ENCODE measurements at regions of chr12 and their contacts with region 1.

Region 1: DNA sequence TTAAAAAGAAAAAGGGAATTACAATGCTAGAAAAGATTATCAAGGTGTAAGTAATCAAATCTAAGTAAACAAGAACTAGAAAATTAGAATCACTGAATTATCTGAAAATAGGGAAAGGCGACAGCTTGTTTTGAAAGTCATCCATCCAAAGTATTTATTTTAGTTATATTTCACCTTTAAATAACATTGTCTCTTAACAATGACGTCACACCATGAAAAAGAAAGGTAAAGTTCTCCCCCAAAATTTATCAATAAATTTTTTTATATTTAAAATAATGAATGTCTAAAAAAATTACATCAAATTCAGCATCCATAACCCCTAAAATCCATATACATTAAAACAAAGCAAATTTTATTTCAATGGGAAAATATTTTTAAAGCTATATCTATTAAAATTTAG is 223.2 kb downstream of the RERGL start:
- DNase-seq: no peak
- H3K4me3 ChIP-seq: no peak overlapping the region
- H3K27ac ChIP-seq: no peak overlapping the region
- H3K4me1 ChIP-seq: no peaks in the 10 kb centered on the region
- H3K27me3 ChIP-seq: no peaks in the 10 kb centered on the region
- CTCF ChIP-seq: no peak
- EP300 ChIP-seq: no peak
- POLR2A ChIP-seq: no peak

Region 2: GRCh38 chr12:17148706-17149105 is 718.1 kb before region 1 on chr12:
- in situ Hi-C with region 1: no loop called
- intact Hi-C with region 1: no loop called
- DNase-seq: no peak
- H3K4me3 ChIP-seq: no peak overlapping the region
- H3K27ac ChIP-seq: no peak overlapping the region
- H3K4me1 ChIP-seq: no peaks in the 10 kb centered on the region
- H3K27me3 ChIP-seq: no peaks in the 10 kb centered on the region
- CTCF ChIP-seq: no peak
- EP300 ChIP-seq: no peak
- POLR2A ChIP-seq: no peak

Region 3: DNA sequence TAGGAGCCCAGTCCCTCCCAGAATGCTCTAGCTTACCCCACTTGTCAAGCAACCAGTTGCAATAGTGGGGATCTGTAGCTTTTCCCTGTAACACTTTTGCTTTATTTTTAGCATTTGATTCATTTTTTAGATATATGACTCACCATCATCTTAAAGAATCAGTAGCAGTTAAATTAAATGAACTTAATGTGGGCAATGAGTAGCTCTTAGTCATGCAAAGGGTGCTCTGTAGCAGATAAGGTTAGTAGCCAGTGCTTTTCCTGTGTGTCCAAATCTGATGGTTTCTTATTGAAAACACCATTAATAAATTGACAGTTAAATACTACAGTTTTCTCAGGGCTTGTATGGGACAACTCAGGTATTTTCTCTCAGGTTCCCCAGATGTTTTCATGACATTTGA is 88.6 kb before region 1 on chr12:
- in situ Hi-C with region 1: loop called in 2 of 4 experiments (anchors 5 to 10 kb)
- intact Hi-C with region 1: loop called (anchors 10 kb)
- DNase-seq: no peak
- H3K4me3 ChIP-seq: no peak overlapping the region
- H3K27ac ChIP-seq: no peak overlapping the region
- H3K4me1 ChIP-seq: no peaks in the 10 kb centered on the region
- H3K27me3 ChIP-seq: no peaks in the 10 kb centered on the region
- CTCF ChIP-seq: no peak
- EP300 ChIP-seq: no peak
- POLR2A ChIP-seq: no peak

Region 4: DNA sequence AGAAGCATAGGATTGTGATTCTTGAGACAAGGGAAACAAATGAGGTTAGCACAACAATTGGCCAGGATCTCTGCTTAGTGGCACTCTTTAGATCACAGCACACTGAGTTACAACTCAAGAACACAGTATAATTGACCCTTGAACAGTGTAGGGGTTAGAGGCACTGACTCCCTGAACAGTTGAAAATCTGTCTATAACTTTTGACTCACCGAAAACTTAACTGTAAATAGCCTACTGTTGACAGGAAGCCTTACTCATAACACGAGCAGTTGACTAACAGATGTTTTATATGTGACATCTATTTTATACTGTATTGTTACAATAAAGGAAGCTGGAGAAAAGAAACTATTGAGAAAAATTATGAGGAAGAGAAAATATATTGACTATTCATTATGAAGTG is 72.9 kb before region 1 on chr12:
- in situ Hi-C with region 1: loop called in 1 of 4 experiments (anchors 10 kb)
- intact Hi-C with region 1: no loop called
- DNase-seq: no peak
- H3K4me3 ChIP-seq: no peak overlapping the region
- H3K27ac ChIP-seq: no peak overlapping the region
- H3K4me1 ChIP-seq: no peaks in the 10 kb centered on the region
- H3K27me3 ChIP-seq: no peaks in the 10 kb centered on the region
- CTCF ChIP-seq: no peak
- EP300 ChIP-seq: no peak
- POLR2A ChIP-seq: no peak

Region 5: GRCh38 chr12:17841496-17841895 is 25.3 kb before region 1 on chr12:
- in situ Hi-C with region 1: no loop called
- intact Hi-C with region 1: no loop called
- DNase-seq: no peak
- H3K4me3 ChIP-seq: no peak overlapping the region
- H3K27ac ChIP-seq: no peak overlapping the region
- H3K4me1 ChIP-seq: no peaks in the 10 kb centered on the region
- H3K27me3 ChIP-seq: no peaks in the 10 kb centered on the region
- CTCF ChIP-seq: no peak
- EP300 ChIP-seq: no peak
- POLR2A ChIP-seq: no peak

Region 6: DNA sequence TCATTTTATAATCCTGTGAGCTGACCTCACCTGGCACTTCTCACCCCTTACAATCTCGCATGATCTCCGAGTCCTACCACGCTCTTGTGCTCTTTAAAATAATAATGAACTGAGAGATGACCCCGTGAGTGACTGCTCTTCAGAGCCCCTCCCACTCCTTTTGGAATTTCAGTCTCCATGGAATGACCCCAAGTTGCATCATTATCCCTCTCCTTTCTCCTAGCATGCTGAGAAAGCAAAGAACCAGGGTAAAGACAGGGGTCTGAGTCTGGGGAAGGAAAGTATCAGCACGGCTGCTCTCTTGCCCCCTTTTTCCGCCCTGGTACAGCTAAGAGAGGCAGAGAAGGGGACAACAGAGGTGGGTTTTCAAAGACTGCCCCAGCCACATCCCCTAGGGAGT is 1084.4 kb after region 1 on chr12:
- in situ Hi-C with region 1: no loop called
- intact Hi-C with region 1: no loop called
- DNase-seq: no peak
- H3K4me3 ChIP-seq: no peak overlapping the region
- H3K27ac ChIP-seq: no peak overlapping the region
- H3K4me1 ChIP-seq: no peaks in the 10 kb centered on the region
- H3K27me3 ChIP-seq: no peaks in the 10 kb centered on the region
- CTCF ChIP-seq: no peak
- EP300 ChIP-seq: no peak
- POLR2A ChIP-seq: no peak